ENCODE measurements at regions of chr14 and their contacts with region 1.

Region 1: DNA sequence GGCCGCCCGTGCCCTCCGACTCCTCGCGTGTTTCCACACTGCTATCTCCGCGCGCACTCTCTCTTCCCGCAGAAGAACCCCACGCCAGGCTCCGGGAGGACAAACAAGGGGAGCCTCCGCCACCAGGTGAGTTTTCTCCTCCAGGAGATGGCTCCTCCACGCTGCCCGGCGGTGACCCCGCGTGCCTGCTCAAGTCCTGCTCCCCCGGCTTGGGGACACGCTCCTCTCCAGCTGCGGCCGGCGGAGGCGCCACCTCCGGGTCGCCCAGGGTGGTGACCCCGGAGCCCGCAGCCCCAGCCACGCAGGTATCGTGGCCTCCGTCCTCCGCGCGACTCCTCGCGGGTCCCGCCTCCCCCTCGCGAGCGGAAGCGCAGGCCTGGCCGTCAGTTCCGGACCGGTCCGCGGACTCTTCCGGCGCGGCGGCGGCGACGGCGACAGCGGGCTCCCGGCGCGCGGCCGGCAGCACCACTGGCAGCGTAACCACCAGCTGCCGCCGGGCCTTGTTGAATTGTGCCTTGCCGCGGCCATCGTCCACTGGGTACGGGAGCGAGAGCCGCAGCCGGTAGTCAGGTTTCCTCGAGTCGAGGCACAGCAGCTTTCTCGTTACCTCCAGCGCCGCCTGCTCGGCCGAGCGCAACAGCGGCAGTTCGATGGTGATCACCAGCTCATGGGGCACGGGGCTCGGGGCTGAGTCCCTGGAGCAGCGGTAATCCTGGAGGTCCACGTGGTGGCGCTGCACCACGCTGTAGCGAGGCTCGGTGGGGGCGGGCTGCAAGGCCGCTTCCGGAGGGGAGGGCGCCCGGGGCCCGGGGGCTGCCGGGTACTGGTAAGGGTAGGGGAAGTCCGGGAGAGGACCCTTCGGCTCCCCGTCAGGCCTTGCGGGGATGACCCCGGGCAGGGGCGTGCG is 1.2 kb downstream of the DNAAF2 start:
- DNase-seq: peak; percentile 91 to 96
- H3K4me3 ChIP-seq: peak overlapping the region; percentile 73 to 88
- H3K27ac ChIP-seq: peak overlapping the region; percentile 81 to 95
- H3K4me1 ChIP-seq: peaks cover 0 to 47% (median 25%) of the 10 kb centered on the region in 4 donors
- H3K27me3 ChIP-seq: no peaks in the 10 kb centered on the region
- CTCF ChIP-seq: peak; percentile 73 to 83

Region 2: DNA sequence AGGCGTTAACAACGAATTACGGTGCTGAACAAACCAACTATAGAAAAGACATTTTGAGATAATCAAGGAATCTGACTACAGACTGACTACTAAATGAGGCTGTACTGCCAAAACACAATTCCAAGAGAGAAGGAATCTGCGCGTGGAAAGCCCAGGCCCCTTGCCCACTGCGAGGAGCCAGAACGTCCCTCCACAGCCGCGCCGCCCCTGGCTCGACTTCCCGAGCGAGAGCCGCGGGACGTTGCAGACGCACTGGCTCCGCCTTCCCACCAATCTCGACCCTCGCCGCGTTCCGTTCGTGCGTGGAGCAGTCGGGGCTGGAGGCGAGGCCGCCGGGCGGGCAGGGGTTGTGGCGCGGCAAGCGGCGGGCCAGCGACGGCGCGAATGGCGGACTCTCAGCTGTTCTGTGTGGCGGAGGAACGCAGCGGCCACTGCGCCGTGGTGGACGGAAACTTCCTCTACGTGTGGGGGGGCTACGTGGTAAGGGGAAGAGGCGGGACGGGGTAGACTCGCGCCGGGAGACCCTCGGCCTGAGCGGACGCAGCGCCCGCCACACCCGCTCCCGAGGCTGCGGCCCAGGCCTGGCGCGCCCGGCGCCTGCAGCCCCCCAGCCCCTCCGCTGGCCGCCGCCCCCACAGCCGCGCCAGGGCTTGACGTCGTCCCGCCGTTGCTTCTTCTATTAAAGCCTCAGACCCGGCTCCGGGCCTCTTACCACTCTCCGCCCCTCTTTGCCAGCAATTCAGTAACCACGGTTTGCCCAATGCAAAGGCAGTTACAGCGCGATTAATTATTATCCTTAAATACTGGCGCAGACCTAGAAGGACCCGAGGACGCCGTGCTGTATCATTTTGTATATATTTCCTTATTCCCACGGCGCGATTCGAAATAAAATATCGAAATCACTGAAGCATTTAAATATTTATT is 59.2 kb after region 1 on chr14 and contains the start of gene KLHDC1:
- intact Hi-C with region 1: loop called (anchors 5 kb)
- DNase-seq: peak; percentile 88 to 94
- H3K4me3 ChIP-seq: peak within 1 kb of the TSS; percentile 68 to 89
- H3K27ac ChIP-seq: peak within 1 kb of the TSS; percentile 87 to 98
- H3K4me1 ChIP-seq: peaks cover 0 to 23% (median 10%) of the 10 kb centered on the region in 4 donors
- H3K27me3 ChIP-seq: no peaks in the 10 kb centered on the region
- CTCF ChIP-seq: no peak

Region 3: GRCh38 chr14:49767562-49768300 is 133.8 kb after region 1 on chr14 and contains the start of gene KLHDC2:
- intact Hi-C with region 1: loop called (anchors 2 kb)
- DNase-seq: peak; percentile 84 to 94
- H3K4me3 ChIP-seq: peak within 1 kb of the TSS; percentile 88 to 96
- H3K27ac ChIP-seq: peak within 1 kb of the TSS; percentile 94 to 98
- H3K4me1 ChIP-seq: peaks cover 0 to 29% (median 23%) of the 10 kb centered on the region in 4 donors
- H3K27me3 ChIP-seq: no peaks in the 10 kb centered on the region
- CTCF ChIP-seq: peak; percentile 11 to 24

Region 4: GRCh38 chr14:49852301-49853157 is 218.6 kb after region 1 on chr14 and contains the start of gene NEMF:
- intact Hi-C with region 1: loop called (anchors 5 kb)
- DNase-seq: peak; percentile 84 to 91
- H3K4me3 ChIP-seq: peak within 1 kb of the TSS; percentile 75 to 80
- H3K27ac ChIP-seq: peak within 1 kb of the TSS; percentile 87 to 89
- H3K4me1 ChIP-seq: peaks cover 0 to 25% (median 18%) of the 10 kb centered on the region in 4 donors
- H3K27me3 ChIP-seq: no peaks in the 10 kb centered on the region
- CTCF ChIP-seq: peak; percentile 79 to 85

Region 5: DNA sequence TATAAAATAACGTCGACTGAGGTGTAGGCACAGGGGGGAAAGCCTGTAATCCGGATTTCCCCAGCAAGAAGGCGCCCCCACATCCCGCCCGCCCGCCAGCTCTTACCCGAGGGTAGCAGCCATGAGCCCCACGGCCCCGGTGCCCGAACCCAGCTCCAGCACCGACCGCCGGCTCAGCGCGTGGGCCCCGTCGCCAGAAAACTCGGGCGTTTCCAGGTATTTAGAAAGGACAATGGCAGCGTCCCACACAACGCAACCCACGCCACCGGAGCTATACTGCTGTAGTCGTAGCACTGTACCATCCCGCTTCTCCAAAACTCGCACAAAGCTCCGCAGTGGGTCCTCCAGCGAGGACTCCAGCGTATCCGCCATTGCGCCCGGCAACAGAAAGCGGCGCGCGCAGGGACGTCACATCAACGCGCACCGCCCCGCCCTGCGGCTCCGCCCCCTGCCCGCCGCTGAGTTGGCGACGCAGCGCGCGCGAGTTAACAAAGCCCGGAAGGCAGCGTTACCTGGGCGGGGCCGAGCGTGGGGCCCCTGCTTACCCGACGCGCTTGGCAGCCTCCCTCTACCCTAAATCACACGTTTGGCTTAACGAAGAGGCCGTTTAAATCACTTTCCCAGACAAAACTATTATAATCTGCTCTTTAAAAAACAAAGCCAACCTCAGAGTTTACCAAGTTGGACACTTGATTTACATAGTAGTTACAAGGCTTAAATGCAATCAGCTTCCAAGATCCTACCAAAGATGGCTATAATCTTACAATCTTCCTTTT is 482.5 kb after region 1 on chr14 and contains the start of gene VCPKMT:
- intact Hi-C with region 1: loop called (anchors 10 kb)
- DNase-seq: peak; percentile 93 to 95
- H3K4me3 ChIP-seq: peak within 1 kb of the TSS; percentile 76 to 83
- H3K27ac ChIP-seq: peak within 1 kb of the TSS; percentile 83 to 86
- H3K4me1 ChIP-seq: peaks cover 0 to 22% (median 12%) of the 10 kb centered on the region in 4 donors
- H3K27me3 ChIP-seq: no peaks in the 10 kb centered on the region
- CTCF ChIP-seq: no peak